Activated CD8-positive, alpha-beta T cell treated with anti-CD3 and anti-CD28 coated beads, Interleukin-2, amount 10 ng/mL, durations not matched to agents 7 days and 5 days (primary cell): ENCODE measurements at regions of chr19 and their contacts with region 1.

Region 1: DNA sequence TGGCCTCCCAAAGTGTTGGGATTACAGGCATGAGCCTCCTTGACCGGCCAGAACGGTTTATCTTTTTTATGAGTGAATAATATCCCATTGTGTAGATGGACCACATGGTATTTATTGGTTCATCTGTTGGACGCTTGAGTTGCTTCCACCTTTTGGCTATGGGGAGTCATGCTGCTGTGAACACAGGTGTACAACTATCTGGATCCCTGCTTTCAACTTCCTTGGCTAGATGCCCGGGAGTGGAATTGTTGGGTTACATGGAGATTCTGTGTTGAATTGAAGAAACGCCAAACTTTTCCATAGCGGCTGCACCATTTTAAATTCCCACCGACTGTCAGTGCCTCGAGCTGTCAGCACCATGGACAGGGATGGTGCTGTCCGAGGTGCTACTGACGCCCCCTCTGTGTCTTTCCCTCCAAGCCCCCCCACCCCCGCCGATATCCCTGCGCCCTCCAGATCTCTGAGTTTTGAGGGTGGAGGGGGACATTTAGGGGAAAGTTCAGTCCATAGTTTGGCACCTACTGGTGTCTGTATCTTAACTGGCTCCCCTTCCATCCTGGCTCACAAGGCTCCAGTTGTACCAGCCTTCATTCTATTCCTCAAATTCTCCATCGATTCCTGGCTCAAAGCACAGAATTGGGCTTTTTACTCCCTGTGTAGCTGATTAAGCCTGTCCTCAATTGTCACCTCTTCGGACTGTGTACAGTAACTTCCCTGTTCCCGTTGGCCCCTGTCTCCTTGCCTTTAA is 27.3 kb downstream of the PNPLA6 start:
- DNase-seq: peak; percentile 36
- ATAC-seq: no peak
- H3K4me3 Mint-ChIP-seq: no peak overlapping the region
- H3K27ac Mint-ChIP-seq: no peak overlapping the region
- H3K4me1 Mint-ChIP-seq: peaks cover 5% of the 10 kb centered on the region
- H3K27me3 Mint-ChIP-seq: no peaks in the 10 kb centered on the region

Region 2: GRCh38 chr19:7544626-7545025 is 18.2 kb before region 1 on chr19:
- CTCF ChIA-PET with region 1: interaction called, 18 read pairs
- POLR2A ChIA-PET with region 1: no interaction called
- DNase-seq: peak; percentile 51
- ATAC-seq: peak; percentile 56
- H3K4me3 Mint-ChIP-seq: peak overlapping the region; percentile 48
- H3K27ac Mint-ChIP-seq: peak overlapping the region; percentile 91
- H3K4me1 Mint-ChIP-seq: peaks cover 57% of the 10 kb centered on the region
- H3K27me3 Mint-ChIP-seq: no peaks in the 10 kb centered on the region

Region 3: GRCh38 chr19:7550987-7551761 is 11.6 kb before region 1 on chr19:
- CTCF ChIA-PET with region 1: interaction called, 18 read pairs
- POLR2A ChIA-PET with region 1: no interaction called
- DNase-seq: peak; percentile 43
- ATAC-seq: peak; percentile 21
- H3K4me3 Mint-ChIP-seq: no peak overlapping the region
- H3K27ac Mint-ChIP-seq: peak overlapping the region; percentile 22
- H3K4me1 Mint-ChIP-seq: peaks cover 41% of the 10 kb centered on the region
- H3K27me3 Mint-ChIP-seq: no peaks in the 10 kb centered on the region

Region 4: DNA sequence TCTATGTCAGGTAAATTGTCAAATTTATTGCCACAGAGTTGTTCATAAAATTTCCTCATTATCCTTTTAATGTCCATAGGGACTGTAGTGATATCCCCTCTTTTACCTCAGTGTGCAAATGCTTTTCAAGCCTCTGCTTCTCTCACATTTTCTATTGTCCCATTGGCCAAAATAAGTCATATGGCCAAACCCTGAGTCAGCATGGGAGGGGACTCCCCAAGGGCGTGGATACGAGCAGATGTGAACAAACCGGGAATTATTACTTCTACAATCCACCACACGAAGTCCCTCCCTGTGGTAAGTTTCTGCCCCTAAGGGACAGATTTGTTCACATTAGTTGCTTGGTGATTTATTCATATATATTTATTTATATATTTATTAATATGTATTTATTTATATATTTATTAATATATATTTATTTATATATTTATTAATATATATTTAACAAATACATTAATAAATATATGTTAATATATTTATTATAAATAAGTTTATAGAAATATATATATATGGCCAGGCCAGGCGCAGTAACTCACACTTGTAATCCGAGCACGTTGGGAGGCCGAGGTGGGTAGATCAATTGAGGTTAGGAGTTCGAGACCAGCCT is 12.7 kb after region 1 on chr19:
- CTCF ChIA-PET with region 1: interaction called, 11 read pairs
- POLR2A ChIA-PET with region 1: no interaction called
- DNase-seq: no peak
- ATAC-seq: no peak
- H3K4me3 Mint-ChIP-seq: no peak overlapping the region
- H3K27ac Mint-ChIP-seq: no peak overlapping the region
- H3K4me1 Mint-ChIP-seq: no peaks in the 10 kb centered on the region
- H3K27me3 Mint-ChIP-seq: peaks cover 4% of the 10 kb centered on the region

Region 5: DNA sequence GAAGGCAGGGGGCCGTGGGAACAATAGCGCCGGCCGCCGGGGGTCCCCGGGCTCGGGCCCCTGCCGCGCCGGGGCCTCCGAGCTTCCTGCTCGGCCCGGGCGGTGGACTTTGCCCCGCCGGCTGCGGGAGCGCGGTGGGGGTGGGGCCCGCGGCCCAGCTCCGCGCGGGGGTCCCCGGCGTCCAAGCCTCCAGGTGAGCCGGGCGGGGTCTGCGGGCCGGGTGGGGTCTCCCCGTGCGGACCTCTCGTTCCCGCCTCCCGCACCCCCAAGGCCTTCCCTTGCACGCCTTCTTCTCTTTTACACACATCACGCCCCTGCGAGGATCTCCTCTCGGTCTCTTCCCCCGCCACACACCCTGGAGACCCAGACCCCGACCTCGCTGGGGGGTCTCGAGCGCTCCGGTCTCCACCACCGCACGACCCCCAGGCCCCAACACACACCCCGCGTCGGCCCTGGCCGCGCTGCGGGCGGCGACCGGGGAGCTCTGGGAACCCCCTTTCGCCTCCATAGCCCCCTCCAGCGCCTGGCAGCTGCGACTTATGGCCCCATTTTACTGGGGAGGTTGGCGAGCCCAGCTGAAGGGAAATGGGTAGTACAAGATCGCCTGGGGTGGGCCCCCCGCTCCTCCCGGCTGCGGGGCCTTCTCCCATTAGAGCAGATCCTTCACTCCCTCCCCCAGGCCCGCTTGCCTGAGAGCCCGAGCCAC is 33.6 kb after region 1 on chr19:
- CTCF ChIA-PET with region 1: interaction called, 10 read pairs
- POLR2A ChIA-PET with region 1: no interaction called
- DNase-seq: no peak
- ATAC-seq: no peak
- H3K4me3 Mint-ChIP-seq: peak overlapping the region; percentile 36
- H3K27ac Mint-ChIP-seq: no peak overlapping the region
- H3K4me1 Mint-ChIP-seq: peaks cover 4% of the 10 kb centered on the region
- H3K27me3 Mint-ChIP-seq: peaks cover 39% of the 10 kb centered on the region

Region 6: DNA sequence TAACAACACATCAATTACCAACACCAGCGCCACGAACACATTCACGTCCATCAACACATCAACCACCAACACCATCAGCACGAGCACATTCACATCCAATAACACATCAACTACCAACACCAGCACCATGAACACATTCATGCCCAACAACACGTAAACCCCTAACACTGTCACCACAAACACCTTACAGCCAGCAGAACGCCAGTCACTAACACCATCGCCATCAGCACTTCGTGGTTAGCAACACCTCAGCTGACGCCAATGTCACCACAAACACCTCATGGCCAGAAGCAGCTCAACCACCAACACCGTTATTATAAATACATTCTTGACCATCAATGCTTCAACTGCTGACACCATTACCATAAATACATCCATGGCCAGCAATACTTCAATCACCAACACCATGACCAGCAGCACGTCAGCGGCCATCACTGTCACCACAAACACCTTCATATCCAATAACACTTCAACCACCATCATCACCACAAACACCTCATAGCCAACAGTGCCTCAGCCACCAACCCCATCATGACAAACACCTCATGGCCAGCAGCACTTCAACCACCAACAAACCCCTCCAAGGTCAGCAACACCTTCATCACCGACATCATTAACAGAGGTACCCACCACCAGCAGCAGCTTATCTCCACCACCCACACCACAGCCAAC is 129.7 kb after region 1 on chr19:
- CTCF ChIA-PET with region 1: no interaction called
- POLR2A ChIA-PET with region 1: no interaction called
- DNase-seq: no peak
- ATAC-seq: no peak
- H3K4me3 Mint-ChIP-seq: no peak overlapping the region
- H3K27ac Mint-ChIP-seq: no peak overlapping the region
- H3K4me1 Mint-ChIP-seq: no peaks in the 10 kb centered on the region
- H3K27me3 Mint-ChIP-seq: peaks cover 3% of the 10 kb centered on the region

Region 7: DNA sequence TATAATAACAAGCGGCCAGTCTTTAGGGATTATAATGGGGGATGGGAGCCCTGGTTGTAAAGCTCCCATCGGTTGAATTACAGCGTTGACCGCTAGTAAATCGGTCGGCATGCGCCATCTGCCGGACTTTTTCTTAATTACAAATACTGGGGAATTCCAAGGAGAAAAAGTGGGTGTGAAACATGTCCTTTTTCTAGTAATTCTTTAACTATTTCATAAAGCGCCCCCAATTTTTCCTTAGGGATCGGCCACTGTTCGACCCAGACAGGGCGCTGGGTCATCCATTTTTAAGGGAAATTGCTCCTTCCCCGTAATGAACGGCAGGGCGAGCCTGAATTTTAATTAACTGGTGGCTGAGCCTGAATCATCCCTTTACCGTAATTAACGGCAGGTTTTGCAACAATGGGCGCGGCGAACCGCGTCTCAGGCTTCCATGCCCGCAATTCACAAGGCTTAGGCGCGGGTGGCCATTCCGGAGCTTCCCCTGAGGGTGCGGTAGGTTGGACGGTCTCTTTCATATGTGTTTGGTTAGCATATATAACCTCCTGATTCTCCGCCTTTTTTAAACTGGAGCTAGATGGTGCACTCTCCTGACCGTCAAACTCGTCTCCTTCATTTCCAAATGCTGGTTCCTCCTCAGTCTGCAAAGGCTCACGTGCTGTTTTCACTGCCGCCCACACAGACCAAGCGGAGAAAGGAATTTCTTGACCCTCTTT is 237.0 kb after region 1 on chr19:
- CTCF ChIA-PET with region 1: interaction called, 32 read pairs
- POLR2A ChIA-PET with region 1: no interaction called
- DNase-seq: peak; percentile 67
- ATAC-seq: no peak
- H3K4me3 Mint-ChIP-seq: no peak overlapping the region
- H3K27ac Mint-ChIP-seq: no peak overlapping the region
- H3K4me1 Mint-ChIP-seq: peaks cover 3% of the 10 kb centered on the region
- H3K27me3 Mint-ChIP-seq: peaks cover 45% of the 10 kb centered on the region